IMR-90 (cell line): ENCODE measurements at regions of chr6 and their contacts with region 1.

Region 1: GRCh38 chr6:10747251-10747972 is at the start of gene TMEM14B:
- DNase-seq: peak; percentile 94
- ATAC-seq: peak; percentile 99
- H3K4me3 ChIP-seq: peak within 1 kb of the TSS; percentile 94
- H3K27ac ChIP-seq: peak within 1 kb of the TSS; percentile 79
- H3K4me1 ChIP-seq: peaks cover 3% of the 10 kb centered on the region
- H3K27me3 ChIP-seq: no peaks in the 10 kb centered on the region
- CTCF ChIP-seq: no peak
- POLR2A ChIP-seq: peak; percentile 78
- RAD21 ChIP-seq: no peak
- total RNA-seq, gene TMEM14B: 66.5 and 158 TPM in 2 replicates

Region 2: GRCh38 chr6:8780653-8781052 is 1966.8 kb before region 1 on chr6:
- CTCF ChIA-PET with region 1: no interaction called
- POLR2A ChIA-PET with region 1: no interaction called
- dilution Hi-C with region 1: no loop called
- in situ Hi-C with region 1: no loop called
- intact Hi-C with region 1: no loop called
- DNase-seq: no peak
- ATAC-seq: no peak
- H3K4me3 ChIP-seq: no peak overlapping the region
- H3K27ac ChIP-seq: no peak overlapping the region
- H3K4me1 ChIP-seq: no peaks in the 10 kb centered on the region
- H3K27me3 ChIP-seq: no peaks in the 10 kb centered on the region
- CTCF ChIP-seq: no peak
- POLR2A ChIP-seq: no peak
- RAD21 ChIP-seq: no peak

Region 3: DNA sequence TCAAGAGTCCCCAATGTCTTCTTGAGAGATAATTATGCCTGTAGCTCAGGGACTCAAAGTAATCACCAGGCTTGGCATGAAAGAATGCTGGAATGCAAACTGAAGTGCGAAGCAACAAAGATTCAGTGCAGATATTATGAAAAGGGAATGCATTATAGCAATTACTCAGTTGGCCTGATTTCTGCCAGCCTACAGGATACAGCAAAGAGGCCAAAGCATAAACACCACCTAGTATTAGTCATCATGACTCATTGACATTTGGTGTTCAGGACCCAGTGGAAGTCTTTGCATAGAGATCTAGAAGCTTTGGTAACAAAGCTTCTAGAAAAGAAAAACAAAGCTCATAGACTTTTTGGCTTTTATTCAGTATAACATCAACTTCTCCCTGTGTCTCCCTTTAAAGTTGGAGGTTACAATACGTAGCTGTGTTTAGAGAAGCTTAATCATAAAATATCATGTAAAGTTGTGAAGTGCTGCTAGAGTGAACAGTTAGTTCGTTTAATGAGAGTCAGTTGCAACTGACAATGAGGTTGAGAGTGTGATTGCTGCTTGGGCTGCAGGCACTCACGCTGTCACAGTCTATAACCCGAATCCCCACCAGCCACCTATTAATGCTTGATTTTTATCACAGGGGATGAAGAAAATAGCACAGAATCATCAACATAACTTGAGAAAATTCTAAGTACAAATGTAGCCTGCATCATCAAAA is 1265.2 kb before region 1 on chr6:
- CTCF ChIA-PET with region 1: no interaction called
- POLR2A ChIA-PET with region 1: no interaction called
- dilution Hi-C with region 1: no loop called
- in situ Hi-C with region 1: loop called (anchors 25 kb)
- intact Hi-C with region 1: no loop called
- DNase-seq: peak; percentile 96
- ATAC-seq: peak; percentile 89
- H3K4me3 ChIP-seq: no peak overlapping the region
- H3K27ac ChIP-seq: peak overlapping the region; percentile 58; the same call in 1 of the 2 replicates
- H3K4me1 ChIP-seq: peaks cover 11% of the 10 kb centered on the region
- H3K27me3 ChIP-seq: no peaks in the 10 kb centered on the region
- CTCF ChIP-seq: no peak
- POLR2A ChIP-seq: no peak
- RAD21 ChIP-seq: no peak

Region 4: DNA sequence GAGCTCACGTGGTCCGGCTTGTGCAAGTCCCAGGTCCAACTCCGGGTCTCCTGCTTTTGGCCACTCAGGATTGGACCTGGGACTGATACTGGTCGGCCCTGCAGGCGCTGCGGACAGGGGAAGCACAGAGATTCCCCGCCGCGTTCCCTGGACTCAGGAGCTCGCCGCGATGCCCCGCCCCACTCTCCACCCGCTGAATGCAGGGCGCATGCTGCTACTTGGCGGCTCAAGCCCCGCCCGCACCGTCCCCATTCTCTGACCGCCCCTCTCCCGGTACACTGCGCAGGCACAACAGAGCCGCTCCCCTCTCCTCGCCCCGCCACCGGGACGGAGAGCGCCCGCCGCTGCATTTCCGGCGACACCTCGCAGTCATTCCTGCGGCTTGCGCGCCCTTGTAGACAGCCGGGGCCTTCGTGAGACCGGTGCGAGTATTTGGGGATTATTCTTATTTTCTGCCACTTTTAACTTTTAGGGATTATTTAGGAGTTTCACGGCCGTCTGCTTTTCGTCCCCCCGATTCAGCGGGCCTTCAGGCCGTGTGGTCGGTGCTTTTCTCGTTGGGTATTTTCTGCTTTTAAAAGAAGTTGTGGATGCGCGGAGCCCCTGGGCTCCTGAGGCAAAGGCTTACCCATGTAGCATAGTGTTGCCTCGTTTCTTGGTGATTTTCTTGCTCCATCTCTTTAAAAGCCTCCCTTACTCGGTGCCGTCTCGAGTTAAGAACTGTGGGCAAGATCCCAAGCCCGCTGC is 24.4 kb before region 1 on chr6 and contains the start of gene TMEM14C:
- CTCF ChIA-PET with region 1: no interaction called
- POLR2A ChIA-PET with region 1: no interaction called
- dilution Hi-C with region 1: no loop called
- in situ Hi-C with region 1: no loop called
- intact Hi-C with region 1: loop called (anchors 1 kb)
- DNase-seq: peak; percentile 99
- ATAC-seq: peak; percentile 97
- H3K4me3 ChIP-seq: peak within 1 kb of the TSS; percentile 91
- H3K27ac ChIP-seq: peak within 1 kb of the TSS; percentile 91
- H3K4me1 ChIP-seq: peaks cover 8% of the 10 kb centered on the region
- H3K27me3 ChIP-seq: no peaks in the 10 kb centered on the region
- CTCF ChIP-seq: no peak
- POLR2A ChIP-seq: peak; percentile 89
- RAD21 ChIP-seq: 0 out of 2 replicates have a peak, but pooled peaks have one; percentile 4
- total RNA-seq, gene TMEM14C: 129 and 141 TPM in 2 replicates

Region 5: GRCh38 chr6:10779076-10779475 is 31.7 kb after region 1 on chr6:
- CTCF ChIA-PET with region 1: no interaction called
- POLR2A ChIA-PET with region 1: no interaction called
- dilution Hi-C with region 1: no loop called
- in situ Hi-C with region 1: no loop called
- intact Hi-C with region 1: no loop called
- DNase-seq: no peak
- ATAC-seq: no peak
- H3K4me3 ChIP-seq: no peak overlapping the region
- H3K27ac ChIP-seq: no peak overlapping the region
- H3K4me1 ChIP-seq: no peaks in the 10 kb centered on the region
- H3K27me3 ChIP-seq: no peaks in the 10 kb centered on the region
- CTCF ChIP-seq: no peak
- POLR2A ChIP-seq: no peak
- RAD21 ChIP-seq: no peak